ENCODE measurements at regions of chr11 and their contacts with region 1.

Region 1: DNA sequence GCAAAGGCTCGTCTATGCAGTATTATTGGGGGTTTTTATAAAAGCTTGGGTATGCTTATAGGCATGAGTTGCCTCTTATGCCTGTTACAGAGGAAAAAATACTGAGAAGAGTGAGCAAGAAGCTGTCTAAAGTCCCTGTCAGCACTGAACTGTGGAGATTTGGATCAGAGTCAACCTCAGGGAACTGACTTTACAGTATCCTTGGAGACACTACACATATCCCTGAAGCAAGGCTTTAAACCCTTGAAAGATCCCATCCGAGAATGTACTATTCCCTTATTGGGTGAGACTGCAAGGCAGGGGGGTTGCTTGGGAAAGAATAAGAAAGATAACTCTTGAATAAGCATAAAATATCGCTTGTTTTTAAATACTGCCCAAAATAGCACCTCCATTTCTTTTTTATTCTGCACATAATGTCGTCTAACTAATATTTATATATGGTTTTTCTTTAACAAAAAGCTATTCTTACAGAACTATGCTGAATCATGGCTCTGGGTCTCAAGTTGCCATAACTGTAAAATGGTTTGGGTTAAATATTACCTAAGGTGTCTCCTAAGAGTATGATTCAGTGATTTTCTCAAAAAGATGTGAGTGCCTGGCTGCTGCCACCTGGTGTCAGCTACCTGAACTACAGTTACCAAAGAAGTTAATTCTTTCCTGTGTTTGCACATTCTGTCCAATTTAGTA is 1062.8 kb downstream of the DLG2 start:
- DNase-seq: no peak
- H3K4me3 Mint-ChIP-seq: no peak overlapping the region
- H3K27ac Mint-ChIP-seq: no peak overlapping the region
- H3K4me1 Mint-ChIP-seq: no peaks in the 10 kb centered on the region
- H3K27me3 Mint-ChIP-seq: no peaks in the 10 kb centered on the region

Region 2: GRCh38 chr11:83836883-83837654 is 727.3 kb before region 1 on chr11:
- intact Hi-C with region 1: loop called (anchors 10 kb)
- DNase-seq: no peak
- H3K4me3 Mint-ChIP-seq: no peak overlapping the region
- H3K27ac Mint-ChIP-seq: no peak overlapping the region
- H3K4me1 Mint-ChIP-seq: peaks cover 2% of the 10 kb centered on the region
- H3K27me3 Mint-ChIP-seq: no peaks in the 10 kb centered on the region

Region 3: DNA sequence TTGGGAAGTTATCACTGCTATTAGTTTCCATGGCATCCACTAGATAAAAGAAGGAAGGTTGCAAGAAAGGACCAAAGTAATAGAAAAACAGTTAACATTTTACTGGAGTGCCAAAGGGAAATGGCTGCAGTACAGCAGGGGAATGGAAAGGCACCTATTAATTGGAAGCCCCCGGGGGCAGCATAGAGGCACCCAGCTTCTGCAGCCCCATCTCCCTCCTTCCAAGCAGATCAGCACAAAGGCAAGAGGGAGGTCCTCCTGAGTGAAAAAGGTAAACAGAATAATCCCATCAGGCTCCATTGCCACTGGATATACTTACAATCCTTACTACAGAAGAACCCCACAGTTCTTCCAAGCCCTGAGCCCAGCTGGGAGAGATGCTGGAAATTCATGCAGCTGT is 175.7 kb after region 1 on chr11:
- intact Hi-C with region 1: no loop called
- DNase-seq: no peak
- H3K4me3 Mint-ChIP-seq: no peak overlapping the region
- H3K27ac Mint-ChIP-seq: no peak overlapping the region
- H3K4me1 Mint-ChIP-seq: no peaks in the 10 kb centered on the region
- H3K27me3 Mint-ChIP-seq: no peaks in the 10 kb centered on the region

Region 4: GRCh38 chr11:85257837-85258236 is 693.5 kb after region 1 on chr11:
- intact Hi-C with region 1: no loop called
- DNase-seq: no peak
- H3K4me3 Mint-ChIP-seq: no peak overlapping the region
- H3K27ac Mint-ChIP-seq: no peak overlapping the region
- H3K4me1 Mint-ChIP-seq: no peaks in the 10 kb centered on the region
- H3K27me3 Mint-ChIP-seq: no peaks in the 10 kb centered on the region

Measured in activated T-helper 2 cell treated with anti-CD3 and anti-CD28 coated beads, Interferon-gamma antibody, Interleukin-2, Interleukin-4, amounts not matched to agents 10 μg/mL and 5 μg/mL and 100 μg/mL, durations not matched to agents 14 hours and 24 hours and 36 hours (primary cell).